Dendritic cell treated with granulocyte-macrophage colony-stimulating factor and Interleukin-4, amounts not matched to agents 40 ng/mL and 50 ng/mL, for 4 days (primary cell): ENCODE measurements at regions of chr10 and their contacts with region 1.

Region 1: GRCh38 chr10:77328272-77328816 is 309.3 kb downstream of the KCNMA1 start:
- H3K4me3 Mint-ChIP-seq: no peak overlapping the region
- H3K27ac Mint-ChIP-seq: no peak overlapping the region
- H3K4me1 Mint-ChIP-seq: no peaks in the 10 kb centered on the region
- H3K27me3 Mint-ChIP-seq: no peaks in the 10 kb centered on the region

Region 2: GRCh38 chr10:77405771-77406241 is 77.5 kb after region 1 on chr10:
- intact Hi-C with region 1: loop called (anchors 2 kb)
- H3K4me3 Mint-ChIP-seq: no peak overlapping the region
- H3K27ac Mint-ChIP-seq: no peak overlapping the region
- H3K4me1 Mint-ChIP-seq: no peaks in the 10 kb centered on the region
- H3K27me3 Mint-ChIP-seq: peaks cover 13% of the 10 kb centered on the region

Region 3: DNA sequence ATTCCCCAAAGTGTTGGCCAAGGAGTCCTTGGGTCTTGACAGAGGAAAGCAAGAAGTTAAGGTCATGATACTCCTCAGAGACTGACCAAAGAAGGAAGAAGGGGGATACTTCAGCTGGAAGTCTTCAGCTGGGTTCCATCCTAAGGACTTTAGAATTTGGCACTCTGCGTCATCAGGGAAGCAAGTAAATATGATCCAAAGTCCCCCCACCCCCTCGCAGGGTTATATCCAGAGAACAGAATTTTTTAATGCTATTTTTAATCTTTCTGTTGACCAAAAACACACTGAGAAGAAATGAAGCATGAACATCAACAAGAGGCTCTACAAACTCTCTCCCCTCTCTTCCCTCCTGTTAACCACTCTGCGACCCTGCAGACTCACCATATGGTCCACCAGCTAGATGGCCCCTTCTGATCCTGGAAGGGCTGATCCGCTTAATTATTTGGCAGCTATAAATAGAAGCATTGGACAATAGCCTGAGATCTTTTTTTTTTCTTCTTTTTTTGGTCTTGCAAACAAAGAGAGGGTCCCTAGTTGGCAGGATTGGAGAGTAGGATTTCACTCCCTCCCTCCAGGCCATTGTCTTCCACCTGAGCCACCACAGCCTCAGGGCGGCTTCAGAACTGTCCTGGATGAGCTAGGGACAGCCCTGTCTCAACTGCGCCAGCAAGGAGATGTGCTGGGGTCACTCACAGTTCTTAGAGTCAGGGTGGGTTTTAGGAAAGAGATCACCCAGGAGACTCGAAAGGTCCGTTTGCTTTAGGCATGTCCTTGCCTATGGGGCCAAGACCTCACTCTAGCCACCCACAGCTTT is 113.2 kb after region 1 on chr10:
- intact Hi-C with region 1: no loop called
- H3K4me3 Mint-ChIP-seq: no peak overlapping the region
- H3K27ac Mint-ChIP-seq: no peak overlapping the region
- H3K4me1 Mint-ChIP-seq: no peaks in the 10 kb centered on the region
- H3K27me3 Mint-ChIP-seq: peaks cover 20% of the 10 kb centered on the region